Activated CD8-positive, alpha-beta T cell treated with anti-CD3 and anti-CD28 coated beads, Interleukin-2, amount 10 ng/mL, durations not matched to agents 7 days and 5 days (primary cell): ENCODE measurements at regions of chr6 and their contacts with region 1.

Region 1: GRCh38 chr6:75611702-75612375 is 10.2 kb downstream of the SENP6 start:
- DNase-seq: peak; percentile 39
- ATAC-seq: peak; percentile 66
- H3K4me3 Mint-ChIP-seq: no peak overlapping the region
- H3K27ac Mint-ChIP-seq: peak overlapping the region; percentile 18
- H3K4me1 Mint-ChIP-seq: peaks cover 67% of the 10 kb centered on the region
- H3K27me3 Mint-ChIP-seq: no peaks in the 10 kb centered on the region

Region 2: GRCh38 chr6:75484535-75484934 is 127.3 kb before region 1 on chr6:
- CTCF ChIA-PET with region 1: no interaction called
- POLR2A ChIA-PET with region 1: no interaction called
- DNase-seq: no peak
- ATAC-seq: no peak
- H3K4me3 Mint-ChIP-seq: no peak overlapping the region
- H3K27ac Mint-ChIP-seq: no peak overlapping the region
- H3K4me1 Mint-ChIP-seq: no peaks in the 10 kb centered on the region
- H3K27me3 Mint-ChIP-seq: peaks cover 21% of the 10 kb centered on the region

Region 3: GRCh38 chr6:75601304-75602245 is 10.3 kb before region 1 on chr6 and contains the start of gene SENP6:
- CTCF ChIA-PET with region 1: interaction called, 7 read pairs
- POLR2A ChIA-PET with region 1: interaction called, 26 read pairs
- DNase-seq: peak; percentile 74
- ATAC-seq: peak; percentile 79
- H3K4me3 Mint-ChIP-seq: peak within 1 kb of the TSS; percentile 98
- H3K27ac Mint-ChIP-seq: peak within 1 kb of the TSS; percentile 98
- H3K4me1 Mint-ChIP-seq: peaks cover 49% of the 10 kb centered on the region
- H3K27me3 Mint-ChIP-seq: no peaks in the 10 kb centered on the region
- total RNA-seq, gene SENP6: 66.2 to 68.9 TPM

Region 4: DNA sequence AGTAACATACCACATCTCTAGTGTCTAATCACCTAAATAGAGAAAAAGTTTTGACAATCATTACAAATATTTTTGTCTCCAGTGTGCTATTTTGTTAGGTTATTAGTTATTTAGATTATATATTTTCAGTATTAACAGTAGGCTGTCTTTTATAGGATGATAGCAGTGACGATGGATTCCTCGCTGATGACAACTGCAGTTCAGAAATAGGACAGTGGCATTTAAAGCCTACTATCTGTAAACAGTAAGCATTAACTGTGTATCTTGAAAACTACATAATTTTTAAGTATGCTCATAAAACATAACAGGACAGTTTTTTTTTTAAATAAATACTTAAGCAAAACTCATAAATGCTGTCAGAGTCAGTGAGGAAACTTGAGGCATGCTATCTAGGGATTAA is 99.3 kb after region 1 on chr6:
- CTCF ChIA-PET with region 1: no interaction called
- POLR2A ChIA-PET with region 1: no interaction called
- DNase-seq: no peak
- ATAC-seq: no peak
- H3K4me3 Mint-ChIP-seq: no peak overlapping the region
- H3K27ac Mint-ChIP-seq: no peak overlapping the region
- H3K4me1 Mint-ChIP-seq: no peaks in the 10 kb centered on the region
- H3K27me3 Mint-ChIP-seq: no peaks in the 10 kb centered on the region